Gastrocnemius medialis (tissue), 4 donors: ENCODE measurements at regions of chr12 and their contacts with region 1.

Region 1: GRCh38 chr12:56636675-56637540 is 6.8 kb upstream of the BAZ2A start:
- DNase-seq: peak; percentile 98 to 99
- ATAC-seq: peak; percentile 74 to 79
- H3K4me3 ChIP-seq: peak overlapping the region; percentile 73 to 88 (median 78)
- H3K27ac ChIP-seq: peak overlapping the region; percentile 95 to 99 (median 97)
- H3K4me1 ChIP-seq: peaks cover 36 to 64% of the 10 kb centered on the region in 2 donors
- H3K27me3 ChIP-seq: no peaks in the 10 kb centered on the region
- CTCF ChIP-seq: peak; percentile 47 to 75 (median 60)
- POLR2A ChIP-seq: peak in 1 of 2 donors; percentile 58

Region 2: DNA sequence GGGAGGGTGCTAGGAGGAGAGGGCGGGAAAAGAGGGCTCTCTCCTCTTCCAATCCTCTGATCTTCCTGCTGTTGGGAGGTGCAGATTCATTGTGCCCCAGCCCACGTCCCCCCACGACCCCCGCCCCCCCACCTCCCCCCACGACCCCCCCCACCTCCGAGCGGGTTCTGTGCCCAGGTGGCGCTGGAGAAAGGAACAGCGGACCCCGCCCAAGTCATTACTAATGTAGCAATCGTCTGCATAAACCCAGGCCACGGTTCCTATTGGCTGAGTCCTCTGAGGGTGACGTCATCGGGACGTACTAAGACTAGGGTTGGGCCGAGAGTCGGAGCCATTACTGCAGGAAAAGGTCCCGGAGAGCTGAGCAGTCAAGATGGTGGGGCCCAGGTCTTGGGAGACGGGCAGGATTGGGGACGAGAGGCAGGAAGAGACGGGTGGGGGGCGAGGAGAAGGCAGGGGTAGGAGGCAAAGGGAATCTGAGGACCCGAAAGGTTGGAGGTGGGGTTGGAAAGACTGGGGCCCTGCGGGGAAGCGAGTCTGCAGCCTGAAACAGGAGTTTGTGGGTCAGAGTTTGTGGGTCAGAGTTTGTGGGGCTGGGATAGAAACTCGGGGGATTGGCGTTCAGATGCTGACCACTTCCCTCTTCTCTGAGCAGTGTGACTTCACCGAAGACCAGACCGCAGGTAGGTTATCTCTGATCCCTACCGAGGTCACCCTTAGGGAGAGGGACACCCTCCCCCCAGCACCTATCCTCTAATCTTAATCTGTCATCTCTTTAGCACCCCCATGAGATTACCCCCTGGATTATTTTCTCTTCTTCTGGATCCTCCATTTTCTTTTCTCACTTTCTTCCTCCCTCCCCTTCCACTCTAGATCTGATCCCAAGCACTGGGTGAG is 478.6 kb before region 1 on chr12 and contains the start of gene MYL6:
- in situ Hi-C with region 1: no loop called
- intact Hi-C with region 1: loop called (anchors 1 kb)
- DNase-seq: peak; percentile 97 to 98
- ATAC-seq: peak; percentile 90 to 94
- H3K4me3 ChIP-seq: peak within 1 kb of the TSS; percentile 68 to 93 (median 80)
- H3K27ac ChIP-seq: peak within 1 kb of the TSS; percentile 87 to 97 (median 96)
- H3K4me1 ChIP-seq: peaks cover 35 to 51% of the 10 kb centered on the region in 2 donors
- H3K27me3 ChIP-seq: no peaks in the 10 kb centered on the region
- CTCF ChIP-seq: peak in 1 of 5 experiments; percentile 7
- POLR2A ChIP-seq: peak; percentile 97 to 98
- total RNA-seq, gene MYL6: 159 to 324 (median 202) TPM

Region 3: DNA sequence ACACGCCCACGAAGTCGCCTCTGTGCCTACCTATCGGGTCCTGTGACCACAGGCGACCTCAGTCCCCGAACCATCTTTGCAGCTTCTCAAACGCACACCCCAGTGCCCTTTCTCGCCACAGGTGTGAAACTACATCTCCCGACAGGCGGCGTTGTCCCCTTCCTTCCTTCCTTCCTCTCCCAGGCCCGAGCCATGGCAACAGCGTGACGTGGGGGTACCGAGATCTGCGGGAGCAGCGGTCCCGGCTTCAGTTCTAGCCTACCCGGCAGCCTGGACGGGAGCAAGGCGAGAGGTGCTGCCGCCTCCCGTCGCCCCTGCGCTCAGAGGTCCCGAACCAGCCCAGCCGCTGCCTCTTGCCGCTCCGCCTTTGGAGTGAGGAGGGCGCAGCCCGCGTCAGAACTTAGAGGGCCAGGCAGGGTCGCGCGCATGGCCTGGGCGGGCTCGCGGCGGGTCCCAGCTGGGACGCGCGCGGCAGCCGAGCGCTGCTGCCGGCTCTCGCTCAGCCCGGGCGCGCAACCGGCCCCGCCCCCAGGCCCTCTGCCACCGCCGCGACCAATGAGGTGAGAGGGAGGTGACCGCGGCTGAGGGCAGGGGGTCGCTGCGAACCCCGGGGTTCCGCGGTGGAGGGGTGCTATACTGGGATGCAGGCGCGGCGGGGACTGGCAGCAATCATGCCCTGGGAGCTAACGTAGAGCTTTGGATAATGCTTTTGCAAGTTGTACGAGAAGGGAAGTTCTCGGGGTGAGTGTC is 370.0 kb before region 1 on chr12 and contains the start of gene COQ10A:
- in situ Hi-C with region 1: no loop called
- intact Hi-C with region 1: loop called (anchors 10 kb)
- DNase-seq: peak; percentile 89 to 94
- ATAC-seq: peak; percentile 64 to 75
- H3K4me3 ChIP-seq: peak within 1 kb of the TSS; percentile 70 to 88 (median 80)
- H3K27ac ChIP-seq: peak within 1 kb of the TSS; percentile 95 to 99 (median 98)
- H3K4me1 ChIP-seq: peaks cover 49 to 52% of the 10 kb centered on the region in 2 donors
- H3K27me3 ChIP-seq: no peaks in the 10 kb centered on the region
- CTCF ChIP-seq: peak; percentile 48 to 81 (median 78)
- POLR2A ChIP-seq: peak; percentile 97 to 98
- total RNA-seq, gene COQ10A: 17.7 to 90.1 (median 54.5) TPM

Region 4: DNA sequence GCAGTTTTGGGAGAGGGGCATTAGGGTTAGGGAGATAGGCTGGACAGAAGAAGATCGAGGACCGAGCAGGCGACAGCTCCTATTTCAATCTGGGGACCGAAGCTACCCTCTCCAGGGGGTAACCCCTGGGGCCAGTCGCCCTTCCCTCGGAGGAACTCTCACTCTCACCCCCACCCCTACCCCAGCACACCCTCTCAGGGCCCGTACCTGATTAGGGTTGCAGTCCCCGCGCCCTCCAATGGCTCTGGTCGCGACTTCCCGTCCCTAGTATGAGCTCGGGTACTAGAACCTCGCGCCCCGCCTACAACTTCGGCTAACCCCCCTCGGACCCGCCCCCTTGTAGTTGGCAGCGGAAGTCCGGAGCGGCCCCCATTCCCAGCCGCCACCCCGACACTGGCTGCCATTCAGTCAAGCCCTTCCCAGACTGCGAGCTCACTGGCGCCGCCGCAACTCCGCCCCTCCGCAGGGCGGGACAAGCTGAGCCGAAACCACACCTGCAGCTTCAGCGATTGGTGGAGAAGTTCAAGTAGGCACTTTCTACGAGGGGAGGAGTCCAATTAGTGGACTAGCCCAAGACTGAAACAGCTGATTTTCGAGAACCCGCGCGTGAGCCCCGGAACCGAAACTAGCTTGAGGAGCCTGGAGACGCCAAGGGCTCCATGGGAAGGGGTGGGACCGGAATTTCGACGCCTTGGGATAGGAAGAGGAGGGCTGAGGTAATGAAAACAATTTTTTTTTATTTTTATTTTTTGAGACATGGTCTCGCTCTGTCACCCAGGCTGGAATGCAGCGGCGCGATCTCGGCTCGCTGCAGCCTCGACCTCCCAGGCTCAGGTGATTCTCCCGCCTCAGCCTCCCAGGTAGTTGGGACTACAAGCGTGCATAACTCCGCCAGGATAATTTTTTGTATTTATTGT is 276.8 kb before region 1 on chr12 and contains the start of gene STAT2:
- in situ Hi-C with region 1: no loop called
- intact Hi-C with region 1: loop called (anchors 5 kb)
- DNase-seq: peak; percentile 98
- ATAC-seq: peak; percentile 99 to 100
- H3K4me3 ChIP-seq: peak within 1 kb of the TSS; percentile 73 to 85 (median 82)
- H3K27ac ChIP-seq: peak within 1 kb of the TSS; percentile 86 to 92 (median 87)
- H3K4me1 ChIP-seq: peaks cover 8 to 12% of the 10 kb centered on the region in 2 donors
- H3K27me3 ChIP-seq: no peaks in the 10 kb centered on the region
- CTCF ChIP-seq: peak in 2 of 5 experiments; percentile 7 to 12
- POLR2A ChIP-seq: peak; percentile 63 to 69
- total RNA-seq, gene STAT2: 21.0 to 33.2 (median 27.4) TPM

Region 5: DNA sequence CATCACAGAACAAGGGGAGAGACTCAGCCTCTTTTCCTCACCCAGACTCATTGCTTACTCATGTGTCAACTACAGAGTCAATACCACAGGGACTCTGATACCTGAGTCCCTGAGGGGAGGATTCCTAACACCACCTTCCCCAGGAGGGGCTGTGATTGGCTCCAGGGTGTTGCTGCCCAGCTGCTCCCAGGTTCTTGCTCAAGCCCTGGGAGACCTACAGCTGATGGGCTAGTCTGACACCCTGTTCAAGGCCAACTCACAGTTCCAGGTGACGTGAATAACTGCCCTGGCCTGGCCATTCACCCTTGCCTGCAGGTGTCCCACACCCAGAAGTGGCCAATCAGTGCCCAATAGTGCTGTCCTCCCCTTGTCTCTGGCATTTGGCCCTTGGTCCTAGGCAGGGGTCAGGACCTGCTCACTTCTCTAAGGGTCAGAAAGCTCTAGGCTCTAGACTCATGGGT is 159.9 kb before region 1 on chr12:
- in situ Hi-C with region 1: no loop called
- intact Hi-C with region 1: no loop called
- DNase-seq: no peak
- ATAC-seq: no peak
- H3K4me3 ChIP-seq: no peak overlapping the region
- H3K27ac ChIP-seq: no peak overlapping the region
- H3K4me1 ChIP-seq: no peaks in the 10 kb centered on the region
- H3K27me3 ChIP-seq: no peaks in the 10 kb centered on the region
- CTCF ChIP-seq: no peak
- POLR2A ChIP-seq: no peak

Region 6: GRCh38 chr12:56510786-56511185 is 126.1 kb before region 1 on chr12:
- in situ Hi-C with region 1: no loop called
- intact Hi-C with region 1: loop called (anchors 5 kb)
- DNase-seq: no peak
- ATAC-seq: no peak
- H3K4me3 ChIP-seq: no peak overlapping the region
- H3K27ac ChIP-seq: no peak overlapping the region
- H3K4me1 ChIP-seq: no peaks in the 10 kb centered on the region
- H3K27me3 ChIP-seq: no peaks in the 10 kb centered on the region
- CTCF ChIP-seq: no peak
- POLR2A ChIP-seq: no peak

Region 7: DNA sequence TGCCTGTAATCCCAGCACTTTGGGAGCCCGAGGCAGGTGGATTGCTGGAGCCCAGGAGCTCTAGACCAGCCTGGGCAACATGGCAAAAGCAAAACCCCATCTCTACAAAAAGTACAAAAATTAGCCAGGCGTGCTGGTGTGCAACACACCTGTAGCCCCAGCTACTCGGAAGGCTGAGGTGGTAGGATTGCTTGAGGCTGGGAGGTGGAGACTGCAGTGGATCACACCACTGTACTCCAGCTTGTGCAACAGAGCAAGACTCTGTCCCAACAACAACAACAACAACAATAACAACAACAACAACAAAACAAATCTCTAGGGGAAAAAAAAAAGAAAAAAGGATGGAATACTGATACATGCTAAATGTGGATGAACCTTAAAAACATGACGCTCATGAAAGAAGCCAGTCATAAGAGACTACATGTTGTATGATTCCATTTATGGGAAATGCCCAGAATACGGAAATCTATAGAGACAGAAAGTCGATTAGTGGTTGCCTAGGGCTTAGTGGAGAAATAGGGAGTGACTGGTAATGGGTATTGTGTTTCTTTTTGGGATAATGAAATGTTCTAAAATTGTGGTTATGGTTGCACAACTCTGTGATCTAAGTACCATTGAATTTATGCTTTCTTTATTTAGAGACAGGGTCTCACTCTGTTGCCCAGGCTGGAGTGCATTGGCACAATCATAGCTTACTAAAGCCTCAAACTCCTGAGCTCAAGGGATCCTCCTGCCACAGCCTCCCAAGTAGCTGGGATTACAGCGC is 107.4 kb before region 1 on chr12:
- in situ Hi-C with region 1: no loop called
- intact Hi-C with region 1: no loop called
- DNase-seq: no peak
- ATAC-seq: no peak
- H3K4me3 ChIP-seq: no peak overlapping the region
- H3K27ac ChIP-seq: no peak overlapping the region
- H3K4me1 ChIP-seq: peaks cover 0 to 4% of the 10 kb centered on the region in 2 donors
- H3K27me3 ChIP-seq: no peaks in the 10 kb centered on the region
- CTCF ChIP-seq: no peak
- POLR2A ChIP-seq: no peak

Region 8: DNA sequence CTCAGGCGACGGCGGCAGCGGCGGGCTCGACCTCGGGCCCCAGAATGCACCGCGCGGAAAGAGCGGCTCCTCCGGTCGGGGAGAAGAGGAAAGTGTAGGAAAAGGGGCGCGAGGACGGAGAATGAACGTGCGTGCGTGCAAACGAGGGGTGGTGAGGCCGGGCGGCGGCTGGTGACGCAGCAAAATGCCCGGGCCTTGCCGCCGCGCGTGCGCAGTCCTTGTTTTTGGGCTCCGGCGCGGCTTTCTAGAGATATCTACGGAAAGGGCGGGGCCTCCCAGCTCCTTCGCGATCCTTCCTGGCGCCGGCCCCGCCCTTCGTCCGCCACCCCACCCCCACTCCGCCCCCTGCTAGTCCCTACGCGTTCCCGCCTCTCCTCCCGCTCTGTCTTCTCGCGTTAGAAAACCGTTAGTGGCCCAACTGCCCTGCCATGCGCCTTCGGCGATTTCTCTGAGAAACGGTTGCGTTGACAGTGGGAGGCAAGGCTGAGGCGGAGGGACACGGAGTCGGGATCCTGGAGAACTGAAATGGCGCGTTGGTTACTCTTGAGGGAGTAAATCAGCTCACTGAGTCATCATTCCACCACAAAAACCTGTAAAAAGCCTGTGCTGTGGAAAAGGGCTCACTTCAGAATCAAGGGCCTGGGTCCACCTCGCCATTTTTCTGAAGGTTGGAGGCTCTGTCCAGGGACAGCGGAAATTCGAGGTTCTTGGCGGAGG is 51.4 kb after region 1 on chr12 and contains the start of gene PTGES3:
- in situ Hi-C with region 1: loop called in 2 of 4 experiments (anchors 5 kb)
- intact Hi-C with region 1: loop called (anchors 1 kb)
- DNase-seq: peak; percentile 96 to 97
- ATAC-seq: peak; percentile 88 to 89
- H3K4me3 ChIP-seq: peak within 1 kb of the TSS; percentile 84 to 95 (median 90)
- H3K27ac ChIP-seq: peak within 1 kb of the TSS; percentile 97 to 99 (median 98)
- H3K4me1 ChIP-seq: peaks cover 33 to 41% of the 10 kb centered on the region in 2 donors
- H3K27me3 ChIP-seq: no peaks in the 10 kb centered on the region
- CTCF ChIP-seq: no peak
- POLR2A ChIP-seq: peak; percentile 96 to 97
- total RNA-seq, gene PTGES3: 57.2 to 81.4 (median 69.3) TPM

Region 9: DNA sequence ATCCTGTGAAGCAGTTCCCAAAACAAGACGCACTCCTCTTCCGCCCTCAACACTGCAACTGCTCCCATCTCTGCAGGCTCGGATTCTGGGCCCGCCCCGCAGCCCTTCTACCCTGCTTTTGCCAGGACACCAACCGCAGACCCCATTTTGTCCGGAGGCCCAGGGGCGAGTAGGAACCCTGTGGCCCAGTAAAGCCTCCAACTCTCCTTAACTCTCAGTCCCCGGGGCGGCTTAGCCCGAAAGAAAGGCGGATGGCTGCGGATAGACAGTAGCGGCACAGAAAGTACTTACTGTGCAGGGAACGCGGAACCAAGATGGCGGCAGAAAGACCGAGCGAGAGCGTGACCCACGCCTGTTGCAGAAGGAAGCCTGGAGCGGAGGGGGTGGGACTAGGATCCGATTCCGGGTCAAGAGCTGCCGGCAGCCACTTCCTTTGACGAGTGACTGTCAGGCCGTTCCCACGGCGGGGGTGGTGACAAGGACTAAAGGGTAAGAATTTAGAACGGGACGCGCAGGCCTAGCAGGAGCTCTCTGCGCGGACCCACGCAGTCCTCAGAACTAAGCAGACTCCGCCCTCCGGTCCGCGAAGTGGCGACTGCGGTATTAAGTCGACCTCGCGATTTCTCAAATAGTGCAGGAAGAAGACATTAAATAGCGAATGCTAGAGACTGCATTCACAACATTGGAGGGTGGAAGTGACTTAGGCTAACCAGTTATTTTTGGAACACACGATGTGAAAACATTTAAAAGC is 88.2 kb after region 1 on chr12 and contains the start of gene NACA:
- in situ Hi-C with region 1: loop called in 3 of 4 experiments (anchors 5 to 10 kb)
- intact Hi-C with region 1: loop called (anchors 1 kb)
- DNase-seq: peak; percentile 99
- ATAC-seq: peak; percentile 85 to 87
- H3K4me3 ChIP-seq: peak within 1 kb of the TSS; percentile 78 to 99 (median 84)
- H3K27ac ChIP-seq: peak within 1 kb of the TSS; percentile 95 to 98 (median 96)
- H3K4me1 ChIP-seq: peaks cover 33 to 43% of the 10 kb centered on the region in 2 donors
- H3K27me3 ChIP-seq: no peaks in the 10 kb centered on the region
- CTCF ChIP-seq: no peak
- POLR2A ChIP-seq: peak; percentile 97 to 98
- total RNA-seq, gene NACA: 225 to 438 (median 398) TPM

Region 10: GRCh38 chr12:56908136-56908535 is 271.2 kb after region 1 on chr12:
- in situ Hi-C with region 1: no loop called
- intact Hi-C with region 1: no loop called
- DNase-seq: no peak
- ATAC-seq: no peak
- H3K4me3 ChIP-seq: no peak overlapping the region
- H3K27ac ChIP-seq: no peak overlapping the region
- H3K4me1 ChIP-seq: no peaks in the 10 kb centered on the region
- H3K27me3 ChIP-seq: no peaks in the 10 kb centered on the region
- CTCF ChIP-seq: no peak
- POLR2A ChIP-seq: no peak

Region 11: DNA sequence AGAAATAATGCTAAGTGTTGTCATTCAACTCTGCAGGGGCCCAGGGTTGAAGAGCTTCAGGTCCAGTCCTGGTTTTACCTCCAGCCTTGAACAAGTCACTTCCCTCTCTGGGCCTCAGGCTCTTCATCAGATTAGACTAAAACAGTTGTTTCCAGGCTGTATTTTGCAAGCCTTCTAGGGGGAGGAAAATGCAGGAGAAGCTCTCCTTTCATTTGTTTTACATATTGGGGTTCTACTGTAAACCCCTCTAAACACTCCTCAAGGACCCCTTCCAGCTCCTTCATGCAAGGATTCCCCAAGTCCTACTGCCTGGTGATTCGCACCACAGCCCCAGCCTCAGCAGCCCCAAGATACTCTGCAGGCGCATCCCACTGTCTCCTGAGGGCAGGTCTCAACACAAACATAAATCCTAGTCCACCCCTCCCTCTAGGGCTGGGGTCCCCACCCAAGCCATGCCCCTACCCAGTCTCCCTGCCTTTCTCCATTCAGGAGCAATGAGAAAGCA is 294.6 kb after region 1 on chr12:
- in situ Hi-C with region 1: no loop called
- intact Hi-C with region 1: no loop called
- DNase-seq: no peak
- ATAC-seq: no peak
- H3K4me3 ChIP-seq: no peak overlapping the region
- H3K27ac ChIP-seq: no peak overlapping the region
- H3K4me1 ChIP-seq: no peaks in the 10 kb centered on the region
- H3K27me3 ChIP-seq: no peaks in the 10 kb centered on the region
- CTCF ChIP-seq: no peak
- POLR2A ChIP-seq: no peak